Dorsolateral prefrontal cortex (tissue), 120 donors: ENCODE measurements at regions of chr1 and their contacts with region 1.

Region 1: GRCh38 chr1:73593804-73594203 is 604.2 kb downstream of the LRRIQ3 start:
- DNase-seq: no peak
- H3K4me3 ChIP-seq: no peak overlapping the region
- H3K27ac ChIP-seq: no peak overlapping the region
- H3K27me3 ChIP-seq: no peaks in the 10 kb centered on the region
- CTCF ChIP-seq: no peak

Region 2: GRCh38 chr1:73576083-73576482 is 17.7 kb before region 1 on chr1:
- intact Hi-C with region 1: loop called in 1 of 2 experiments (anchors 2 kb)
- DNase-seq: no peak
- H3K4me3 ChIP-seq: no peak overlapping the region
- H3K27ac ChIP-seq: no peak overlapping the region
- H3K27me3 ChIP-seq: no peaks in the 10 kb centered on the region
- CTCF ChIP-seq: no peak